ENCODE measurements at regions of chr22 and their contacts with region 1.

Region 1: DNA sequence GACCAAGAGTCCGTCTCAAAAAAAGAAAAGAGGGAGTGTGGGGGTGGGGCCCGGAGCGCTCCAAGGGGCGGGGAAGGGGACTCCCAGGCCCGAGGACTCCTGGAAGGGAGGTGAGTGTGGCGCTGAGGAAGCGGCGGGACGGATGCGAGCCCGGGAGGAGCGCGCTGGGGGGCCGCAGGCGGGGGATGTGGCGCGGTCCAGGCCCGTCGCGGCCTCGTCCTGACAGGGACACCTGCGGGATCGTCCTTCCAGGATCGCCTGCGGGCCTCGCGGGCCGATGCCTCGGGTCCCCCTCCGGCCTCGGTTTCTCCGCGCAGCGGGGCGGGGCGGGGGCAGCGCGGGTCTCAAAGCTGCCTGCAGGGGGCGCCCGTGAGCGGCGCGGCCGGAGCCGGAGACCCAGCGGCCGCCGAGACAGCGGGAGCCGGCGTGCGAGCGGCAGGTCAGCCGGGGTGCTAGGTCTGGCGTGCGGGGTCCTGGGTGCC is 3.8 kb upstream of the ADORA2A start:
- DNase-seq: peak; percentile 49
- H3K4me3 ChIP-seq: peak overlapping the region; percentile 58
- H3K27ac ChIP-seq: peak overlapping the region; percentile 54
- H3K4me1 ChIP-seq: no peaks in the 10 kb centered on the region
- H3K27me3 ChIP-seq: no peaks in the 10 kb centered on the region
- CTCF ChIP-seq: peak; percentile 63

Region 2: GRCh38 chr22:24156913-24157821 is 266.4 kb before region 1 on chr22:
- CTCF ChIA-PET with region 1: no interaction called
- POLR2A ChIA-PET with region 1: no interaction called
- intact Hi-C with region 1: no loop called
- DNase-seq: peak; percentile 85
- H3K4me3 ChIP-seq: peak overlapping the region; percentile 65
- H3K27ac ChIP-seq: peak overlapping the region; percentile 47
- H3K4me1 ChIP-seq: peaks cover 54% of the 10 kb centered on the region
- H3K27me3 ChIP-seq: no peaks in the 10 kb centered on the region
- CTCF ChIP-seq: peak; percentile 74

Region 3: DNA sequence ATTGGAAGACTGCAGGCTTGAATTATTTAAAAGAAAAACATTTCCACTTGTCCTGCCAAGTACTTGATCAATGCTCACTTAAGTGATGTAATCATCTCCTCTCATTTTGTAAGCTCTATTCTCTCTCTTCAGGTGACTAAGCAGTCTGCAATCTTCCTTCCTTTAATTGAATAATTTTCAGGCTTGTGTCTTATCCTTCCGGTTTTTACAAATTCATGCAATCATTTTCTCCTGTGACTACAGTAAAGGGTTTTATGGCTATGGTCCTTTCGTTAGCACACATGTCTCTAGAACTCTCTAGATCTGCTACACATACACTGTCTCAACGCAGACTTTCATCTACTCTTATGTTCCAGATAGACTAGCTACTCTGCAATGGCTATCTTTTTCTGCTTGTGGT is 59.0 kb after region 1 on chr22:
- CTCF ChIA-PET with region 1: interaction called, 7 read pairs
- POLR2A ChIA-PET with region 1: no interaction called
- intact Hi-C with region 1: loop called (anchors 5 kb)
- DNase-seq: peak; percentile 91
- H3K4me3 ChIP-seq: no peak overlapping the region
- H3K27ac ChIP-seq: peak overlapping the region; percentile 70
- H3K4me1 ChIP-seq: peaks cover 58% of the 10 kb centered on the region
- H3K27me3 ChIP-seq: no peaks in the 10 kb centered on the region
- CTCF ChIP-seq: no peak

Region 4: GRCh38 chr22:24503137-24503842 is 79.7 kb after region 1 on chr22:
- CTCF ChIA-PET with region 1: interaction called, 5 read pairs
- POLR2A ChIA-PET with region 1: no interaction called
- intact Hi-C with region 1: loop called (anchors 2 kb)
- DNase-seq: peak; percentile 73
- H3K4me3 ChIP-seq: no peak overlapping the region
- H3K27ac ChIP-seq: no peak overlapping the region
- H3K4me1 ChIP-seq: peaks cover 6% of the 10 kb centered on the region
- H3K27me3 ChIP-seq: no peaks in the 10 kb centered on the region
- CTCF ChIP-seq: peak; percentile 74

Region 5: DNA sequence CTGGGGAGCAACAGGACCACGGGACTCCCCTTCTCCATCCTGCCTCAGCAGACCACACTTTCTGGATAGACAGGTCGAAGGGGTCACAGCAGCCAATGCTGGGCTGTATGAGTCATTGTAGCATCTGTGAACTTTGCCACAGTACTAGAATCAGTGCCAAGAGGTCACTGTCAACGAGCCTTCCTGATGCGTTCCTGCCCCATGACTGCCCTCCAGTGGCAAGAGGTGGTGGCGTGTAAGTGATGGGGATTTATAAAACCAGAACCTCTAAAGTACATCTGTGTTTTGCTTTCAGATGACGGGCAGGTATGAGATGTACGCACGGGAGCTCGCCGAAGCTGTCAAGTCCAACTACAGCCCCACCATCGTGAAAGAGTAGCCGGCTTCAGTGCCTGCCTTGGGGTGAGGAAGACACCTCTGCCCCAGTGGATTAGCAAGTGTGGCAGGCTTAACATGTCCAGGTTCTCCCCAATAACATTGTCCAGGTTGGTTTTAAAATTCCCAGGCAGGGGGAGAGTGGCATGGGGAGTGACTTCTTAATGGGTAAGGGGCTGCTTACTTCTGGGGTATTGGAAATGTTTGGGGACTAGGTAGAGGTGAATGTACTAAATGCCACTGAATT is 102.0 kb after region 1 on chr22:
- CTCF ChIA-PET with region 1: interaction called, 5 read pairs
- POLR2A ChIA-PET with region 1: no interaction called
- intact Hi-C with region 1: loop called (anchors 1 kb)
- DNase-seq: peak; percentile 69
- H3K4me3 ChIP-seq: no peak overlapping the region
- H3K27ac ChIP-seq: no peak overlapping the region
- H3K4me1 ChIP-seq: no peaks in the 10 kb centered on the region
- H3K27me3 ChIP-seq: no peaks in the 10 kb centered on the region
- CTCF ChIP-seq: peak; percentile 94

Measured in A673 (cell line).